IMR-90 (cell line): ENCODE measurements at regions of chr10 and their contacts with region 1.

Region 1: GRCh38 chr10:96803318-96803664 is 28.8 kb upstream of the LCOR start:
- DNase-seq: no peak
- ATAC-seq: no peak
- H3K4me3 ChIP-seq: no peak overlapping the region
- H3K27ac ChIP-seq: no peak overlapping the region
- H3K4me1 ChIP-seq: no peaks in the 10 kb centered on the region
- H3K27me3 ChIP-seq: no peaks in the 10 kb centered on the region; the same call in 1 of the 2 replicates
- CTCF ChIP-seq: no peak
- POLR2A ChIP-seq: no peak
- RAD21 ChIP-seq: no peak

Region 2: GRCh38 chr10:96719850-96720421 is 83.4 kb before region 1 on chr10:
- CTCF ChIA-PET with region 1: no interaction called
- POLR2A ChIA-PET with region 1: interaction called, 12 read pairs
- dilution Hi-C with region 1: no loop called
- in situ Hi-C with region 1: no loop called
- intact Hi-C with region 1: no loop called
- DNase-seq: no peak
- ATAC-seq: peak; percentile 36; the same call in 1 of the 2 replicates
- H3K4me3 ChIP-seq: peak overlapping the region; percentile 41
- H3K27ac ChIP-seq: no peak overlapping the region
- H3K4me1 ChIP-seq: no peaks in the 10 kb centered on the region
- H3K27me3 ChIP-seq: peaks cover 51% of the 10 kb centered on the region
- CTCF ChIP-seq: peak; percentile 38
- POLR2A ChIP-seq: no peak
- RAD21 ChIP-seq: peak; percentile 31